ENCODE measurements at regions of chr7 and their contacts with region 1.

Region 1: DNA sequence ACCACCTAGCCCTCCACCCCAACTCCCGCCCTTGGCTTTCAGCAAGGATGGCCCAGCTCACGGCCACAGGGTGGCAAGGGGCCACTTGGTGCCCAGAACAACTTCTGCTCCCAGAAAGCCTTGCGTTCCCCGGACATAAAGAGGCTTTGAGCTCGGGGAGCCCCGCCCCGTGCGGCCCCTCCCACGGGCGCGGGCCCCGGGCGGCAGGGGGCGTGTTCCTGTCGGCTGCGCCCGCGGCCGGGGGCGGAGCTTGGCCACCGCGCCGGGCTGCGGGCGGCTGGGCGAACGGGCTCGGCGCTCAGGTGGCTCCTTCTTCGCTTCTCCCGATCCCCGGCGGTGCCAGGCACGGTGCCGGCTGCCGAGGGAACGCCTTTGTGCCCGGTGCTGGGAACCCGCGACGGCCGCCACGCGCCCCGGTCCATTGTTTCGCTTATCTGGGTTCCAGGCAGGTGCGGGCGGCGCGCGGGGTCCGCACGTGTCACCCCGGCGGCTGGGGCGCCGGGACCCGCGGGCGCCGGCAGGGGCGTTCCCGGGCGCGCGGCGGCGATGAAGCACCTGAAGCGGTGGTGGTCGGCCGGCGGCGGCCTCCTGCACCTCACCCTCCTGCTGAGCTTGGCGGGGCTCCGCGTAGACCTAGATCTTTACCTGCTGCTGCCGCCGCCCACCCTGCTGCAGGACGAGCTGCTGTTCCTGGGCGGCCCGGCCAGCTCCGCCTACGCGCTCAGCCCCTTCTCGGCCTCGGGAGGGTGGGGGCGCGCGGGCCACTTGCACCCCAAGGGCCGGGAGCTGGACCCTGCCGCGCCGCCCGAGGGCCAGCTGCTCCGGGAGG is at the start of gene NFE2L3:
- DNase-seq: peak; percentile 91
- ATAC-seq: peak; percentile 68
- H3K4me3 Mint-ChIP-seq: peak within 1 kb of the TSS; percentile 93
- H3K27ac Mint-ChIP-seq: peak within 1 kb of the TSS; percentile 97
- H3K4me1 Mint-ChIP-seq: peaks cover 52% of the 10 kb centered on the region
- H3K27me3 Mint-ChIP-seq: no peaks in the 10 kb centered on the region
- total RNA-seq, gene NFE2L3: 19.9 to 23.8 TPM

Region 2: GRCh38 chr7:25951031-25951948 is 200.9 kb before region 1 on chr7:
- CTCF ChIA-PET with region 1: no interaction called
- POLR2A ChIA-PET with region 1: no interaction called
- intact Hi-C with region 1: loop called in 1 of 2 experiments (anchors 2 kb)
- DNase-seq: peak; percentile 94
- ATAC-seq: peak; percentile 99
- H3K4me3 Mint-ChIP-seq: peak overlapping the region; percentile 80
- H3K27ac Mint-ChIP-seq: peak overlapping the region; percentile 72
- H3K4me1 Mint-ChIP-seq: peaks cover 17% of the 10 kb centered on the region
- H3K27me3 Mint-ChIP-seq: no peaks in the 10 kb centered on the region

Region 3: DNA sequence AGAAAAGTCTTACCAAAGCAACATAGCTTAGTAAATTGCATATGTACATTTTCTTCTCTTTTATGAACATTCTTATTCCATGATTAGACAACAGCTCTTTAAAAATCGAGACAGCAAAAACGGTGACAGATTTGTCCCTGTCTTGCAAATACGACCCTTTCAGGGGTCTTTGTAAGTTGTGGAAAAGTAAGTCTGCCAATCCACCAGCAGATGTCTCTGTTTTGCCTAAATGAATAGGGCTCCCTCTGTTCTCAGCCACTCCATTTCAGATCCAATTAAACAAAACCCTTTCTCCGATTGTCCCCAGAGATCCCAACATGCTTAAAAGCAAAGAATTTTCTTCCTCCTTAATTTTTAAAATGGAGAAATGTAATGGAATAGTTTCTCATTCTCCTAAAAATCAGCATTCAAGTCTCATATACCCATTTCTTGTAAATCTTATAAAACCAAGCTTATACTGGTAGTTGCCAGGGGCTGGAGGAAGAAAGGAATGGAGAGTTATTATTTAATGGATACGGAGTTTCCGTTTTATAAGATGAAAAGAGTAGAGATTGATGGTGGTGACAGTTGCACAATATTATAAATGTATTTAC is 61.1 kb before region 1 on chr7:
- CTCF ChIA-PET with region 1: interaction called, 21 read pairs
- POLR2A ChIA-PET with region 1: interaction called, 3 read pairs
- intact Hi-C with region 1: loop called in 1 of 2 experiments (anchors 2 kb)
- DNase-seq: no peak
- ATAC-seq: peak; percentile 71
- H3K4me3 Mint-ChIP-seq: no peak overlapping the region
- H3K27ac Mint-ChIP-seq: peak overlapping the region; percentile 1
- H3K4me1 Mint-ChIP-seq: peaks cover 20% of the 10 kb centered on the region
- H3K27me3 Mint-ChIP-seq: no peaks in the 10 kb centered on the region

Region 4: GRCh38 chr7:26167301-26167934 is 15.3 kb after region 1 on chr7:
- CTCF ChIA-PET with region 1: interaction called, 13 read pairs
- POLR2A ChIA-PET with region 1: interaction called, 32 read pairs
- intact Hi-C with region 1: loop called in 1 of 2 experiments (anchors 1 kb)
- DNase-seq: peak; percentile 68
- ATAC-seq: peak; percentile 88
- H3K4me3 Mint-ChIP-seq: peak overlapping the region; percentile 29
- H3K27ac Mint-ChIP-seq: peak overlapping the region; percentile 93
- H3K4me1 Mint-ChIP-seq: peaks cover 33% of the 10 kb centered on the region
- H3K27me3 Mint-ChIP-seq: no peaks in the 10 kb centered on the region

Region 5: GRCh38 chr7:26193432-26194207 is 41.5 kb after region 1 on chr7:
- CTCF ChIA-PET with region 1: interaction called, 14 read pairs
- POLR2A ChIA-PET with region 1: interaction called, 28 read pairs
- intact Hi-C with region 1: loop called in 1 of 2 experiments (anchors 1 kb)
- DNase-seq: no peak
- ATAC-seq: no peak
- H3K4me3 Mint-ChIP-seq: peak overlapping the region; percentile 100
- H3K27ac Mint-ChIP-seq: peak overlapping the region; percentile 88
- H3K4me1 Mint-ChIP-seq: peaks cover 76% of the 10 kb centered on the region
- H3K27me3 Mint-ChIP-seq: no peaks in the 10 kb centered on the region

Measured in activated CD4-positive, alpha-beta T cell treated with anti-CD3 and anti-CD28 coated beads for 36 hours (primary cell).